ENCODE measurements at regions of chr6 and their contacts with region 1.

Region 1: GRCh38 chr6:161257793-161258457 is 15.9 kb downstream of the AGPAT4 start:
- DNase-seq: peak in 1 of 2 donors; percentile 45
- ATAC-seq: peak in 6 of 8 donors; percentile 33 to 65 (median 56)
- H3K4me3 ChIP-seq: no peak overlapping the region
- H3K27ac ChIP-seq: peak overlapping the region in 4 of 10 donors; percentile 10 to 53 (median 27)
- H3K4me1 ChIP-seq: peaks cover 0 to 23% (median 0%) of the 10 kb centered on the region in 9 donors
- H3K27me3 ChIP-seq: no peaks in the 10 kb centered on the region
- CTCF ChIP-seq: no peak

Region 2: GRCh38 chr6:161215876-161216615 is 41.9 kb before region 1 on chr6:
- intact Hi-C with region 1: loop called in 1 of 10 experiments (anchors 2 kb)
- DNase-seq: no peak
- ATAC-seq: no peak
- H3K4me3 ChIP-seq: no peak overlapping the region
- H3K27ac ChIP-seq: no peak overlapping the region
- H3K4me1 ChIP-seq: no peaks in the 10 kb centered on the region
- H3K27me3 ChIP-seq: no peaks in the 10 kb centered on the region
- CTCF ChIP-seq: no peak

Region 3: DNA sequence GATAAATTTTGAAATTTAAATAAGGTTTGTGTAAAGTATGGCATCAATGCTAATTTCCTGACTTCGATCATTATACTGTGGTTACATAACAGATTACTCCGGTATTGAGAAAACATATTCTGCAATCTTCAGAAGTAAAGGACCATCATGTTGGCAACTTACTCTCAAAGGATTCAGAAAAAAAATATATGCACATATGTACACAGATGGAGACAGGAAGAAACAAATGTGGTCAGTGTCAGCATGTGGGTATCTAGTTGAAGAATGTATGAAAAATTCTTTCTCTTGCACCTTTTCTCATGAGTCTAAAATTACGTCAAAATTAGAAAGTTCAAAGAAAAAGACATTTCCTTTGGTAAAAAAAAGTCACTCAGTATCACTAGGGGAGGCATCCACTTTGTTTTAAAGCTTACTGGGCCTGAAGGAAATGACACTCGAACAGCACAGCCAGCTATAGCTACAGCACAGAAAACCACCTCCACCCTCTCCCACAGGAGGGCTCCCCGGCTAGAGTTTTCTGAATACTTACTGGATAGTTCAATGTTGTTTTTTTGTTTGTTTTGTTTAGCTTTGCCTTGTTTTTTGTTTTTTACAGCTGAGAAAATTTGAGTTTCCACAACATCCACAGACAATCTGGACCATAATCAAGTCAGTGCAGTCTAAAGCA is 333.2 kb after region 1 on chr6:
- intact Hi-C with region 1: no loop called
- DNase-seq: no peak
- ATAC-seq: no peak
- H3K4me3 ChIP-seq: no peak overlapping the region
- H3K27ac ChIP-seq: no peak overlapping the region
- H3K4me1 ChIP-seq: no peaks in the 10 kb centered on the region
- H3K27me3 ChIP-seq: no peaks in the 10 kb centered on the region
- CTCF ChIP-seq: no peak

Region 4: GRCh38 chr6:161788531-161788930 is 530.6 kb after region 1 on chr6:
- intact Hi-C with region 1: no loop called
- DNase-seq: no peak
- ATAC-seq: no peak
- H3K4me3 ChIP-seq: no peak overlapping the region
- H3K27ac ChIP-seq: no peak overlapping the region
- H3K4me1 ChIP-seq: no peaks in the 10 kb centered on the region
- H3K27me3 ChIP-seq: no peaks in the 10 kb centered on the region
- CTCF ChIP-seq: no peak